Esophagus muscularis mucosa (tissue), 4 donors: ENCODE measurements at regions of chr12 and their contacts with region 1.

Region 1: GRCh38 chr12:56224102-56224701 is at the start of gene NABP2:
- DNase-seq: peak; percentile 99
- H3K4me3 ChIP-seq: peak within 1 kb of the TSS; percentile 57 to 65 (median 60)
- H3K27ac ChIP-seq: peak within 1 kb of the TSS; percentile 94 to 98 (median 96)
- H3K4me1 ChIP-seq: peaks cover 38 to 56% (median 50%) of the 10 kb centered on the region in 4 donors
- H3K27me3 ChIP-seq: no peaks in the 10 kb centered on the region
- CTCF ChIP-seq: peak in 2 of 3 experiments; percentile 95 to 98
- EP300 ChIP-seq: no peak
- POLR2A ChIP-seq: no peak
- total RNA-seq, gene NABP2: 27.0 to 36.4 (median 30.9) TPM

Region 2: DNA sequence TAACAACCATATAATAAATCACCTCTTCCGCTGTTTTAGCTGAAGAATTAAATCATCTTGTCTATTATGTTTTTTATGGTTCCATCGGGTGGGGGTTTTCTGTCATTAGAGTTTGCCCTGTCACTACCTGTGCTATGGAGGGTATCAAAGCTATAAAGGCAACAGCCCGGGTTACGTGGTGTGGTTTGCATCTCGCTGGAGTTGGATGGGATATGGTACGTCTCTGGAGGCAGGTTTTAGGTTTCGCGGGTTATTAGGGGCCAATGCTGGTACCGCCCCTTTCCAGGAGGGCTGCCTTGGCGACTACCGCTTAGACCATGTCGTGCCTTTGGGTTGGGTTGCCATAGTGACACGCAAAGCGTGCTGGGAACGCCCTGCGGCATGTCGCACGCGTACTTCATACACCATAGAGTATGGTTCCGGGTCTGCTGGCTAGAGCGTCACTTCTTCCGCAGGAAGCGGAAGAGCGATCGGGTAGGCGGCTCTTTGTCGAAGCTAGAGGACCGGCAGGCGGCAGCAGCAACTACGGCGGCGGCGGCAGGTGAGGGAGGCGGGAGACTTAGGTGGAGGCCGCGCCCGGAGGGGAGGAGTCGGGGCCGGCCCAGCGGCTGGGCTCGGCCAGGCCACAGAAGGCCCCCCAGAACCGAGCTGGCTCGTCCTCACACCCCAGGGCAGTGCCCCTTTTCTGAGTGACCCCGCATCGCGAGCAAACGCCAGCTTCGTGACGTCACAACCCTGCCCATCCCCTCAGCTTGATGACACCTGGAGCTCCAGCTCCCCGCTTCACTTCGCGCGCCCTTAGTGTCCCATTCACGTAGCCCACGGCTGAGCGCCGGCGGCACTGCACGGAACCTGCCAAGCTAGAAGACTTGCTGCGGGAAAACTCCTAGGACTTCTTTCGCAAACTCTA is 106.2 kb before region 1 on chr12 and contains the start of gene ZC3H10:
- intact Hi-C with region 1: loop called (anchors 2 kb)
- DNase-seq: peak; percentile 99
- H3K4me3 ChIP-seq: peak within 1 kb of the TSS; percentile 66 to 86 (median 78)
- H3K27ac ChIP-seq: peak within 1 kb of the TSS; percentile 92 to 98 (median 94)
- H3K4me1 ChIP-seq: peaks cover 47 to 64% (median 54%) of the 10 kb centered on the region in 4 donors
- H3K27me3 ChIP-seq: no peaks in the 10 kb centered on the region
- CTCF ChIP-seq: peak; percentile 48 to 53 (median 48)
- EP300 ChIP-seq: no peak
- POLR2A ChIP-seq: peak; percentile 86
- total RNA-seq, gene ZC3H10: 5.0 to 7.9 (median 6.6) TPM

Region 3: GRCh38 chr12:56206457-56207166 is 17.6 kb before region 1 on chr12:
- intact Hi-C with region 1: loop called (anchors 2 kb)
- DNase-seq: no peak
- H3K4me3 ChIP-seq: no peak overlapping the region
- H3K27ac ChIP-seq: peak overlapping the region; percentile 16 to 55 (median 28)
- H3K4me1 ChIP-seq: peaks cover 0 to 12% (median 4%) of the 10 kb centered on the region in 4 donors
- H3K27me3 ChIP-seq: no peaks in the 10 kb centered on the region
- CTCF ChIP-seq: peak; percentile 58 to 71 (median 62)
- EP300 ChIP-seq: no peak
- POLR2A ChIP-seq: no peak